A673 (cell line): ENCODE measurements at regions of chr11 and their contacts with region 1.

Region 1: GRCh38 chr11:120303004-120303637 is 22.0 kb upstream of the TLCD5 start:
- DNase-seq: peak; percentile 82
- H3K4me3 ChIP-seq: no peak overlapping the region
- H3K27ac ChIP-seq: no peak overlapping the region
- H3K4me1 ChIP-seq: no peaks in the 10 kb centered on the region
- H3K27me3 ChIP-seq: no peaks in the 10 kb centered on the region
- CTCF ChIP-seq: peak; percentile 96

Region 2: DNA sequence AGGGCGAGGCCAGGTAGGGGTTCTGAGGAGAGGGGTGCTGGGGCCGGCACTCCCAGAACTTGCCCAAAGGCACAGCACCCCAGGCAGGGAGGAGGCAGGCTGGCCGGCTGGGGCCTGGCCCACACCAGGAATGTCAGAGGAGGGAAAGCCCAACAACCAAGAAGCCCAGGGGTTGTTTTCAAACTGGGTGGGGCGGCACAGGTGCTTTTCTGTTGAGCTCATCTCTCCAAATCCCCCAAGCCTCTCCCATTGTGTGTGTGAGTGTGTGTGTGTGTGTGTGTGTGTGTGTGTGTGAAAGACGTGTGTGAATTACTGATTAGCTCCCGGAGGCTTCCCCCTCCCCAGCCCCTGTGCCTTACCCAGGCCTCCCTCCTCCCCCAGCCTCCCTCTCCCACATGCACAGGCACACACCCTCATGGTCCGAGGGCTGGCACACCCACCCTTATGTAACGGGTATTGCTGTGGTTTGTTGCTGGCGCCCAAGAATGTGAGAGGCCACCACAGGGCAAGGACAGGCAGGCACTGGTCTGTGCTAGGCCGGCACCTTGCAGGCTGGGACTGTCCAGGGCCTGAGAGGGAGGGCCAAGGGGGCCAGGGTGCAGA is 181.1 kb before region 1 on chr11:
- CTCF ChIA-PET with region 1: no interaction called
- POLR2A ChIA-PET with region 1: no interaction called
- intact Hi-C with region 1: no loop called
- DNase-seq: no peak
- H3K4me3 ChIP-seq: no peak overlapping the region
- H3K27ac ChIP-seq: no peak overlapping the region
- H3K4me1 ChIP-seq: no peaks in the 10 kb centered on the region
- H3K27me3 ChIP-seq: no peaks in the 10 kb centered on the region
- CTCF ChIP-seq: no peak

Region 3: DNA sequence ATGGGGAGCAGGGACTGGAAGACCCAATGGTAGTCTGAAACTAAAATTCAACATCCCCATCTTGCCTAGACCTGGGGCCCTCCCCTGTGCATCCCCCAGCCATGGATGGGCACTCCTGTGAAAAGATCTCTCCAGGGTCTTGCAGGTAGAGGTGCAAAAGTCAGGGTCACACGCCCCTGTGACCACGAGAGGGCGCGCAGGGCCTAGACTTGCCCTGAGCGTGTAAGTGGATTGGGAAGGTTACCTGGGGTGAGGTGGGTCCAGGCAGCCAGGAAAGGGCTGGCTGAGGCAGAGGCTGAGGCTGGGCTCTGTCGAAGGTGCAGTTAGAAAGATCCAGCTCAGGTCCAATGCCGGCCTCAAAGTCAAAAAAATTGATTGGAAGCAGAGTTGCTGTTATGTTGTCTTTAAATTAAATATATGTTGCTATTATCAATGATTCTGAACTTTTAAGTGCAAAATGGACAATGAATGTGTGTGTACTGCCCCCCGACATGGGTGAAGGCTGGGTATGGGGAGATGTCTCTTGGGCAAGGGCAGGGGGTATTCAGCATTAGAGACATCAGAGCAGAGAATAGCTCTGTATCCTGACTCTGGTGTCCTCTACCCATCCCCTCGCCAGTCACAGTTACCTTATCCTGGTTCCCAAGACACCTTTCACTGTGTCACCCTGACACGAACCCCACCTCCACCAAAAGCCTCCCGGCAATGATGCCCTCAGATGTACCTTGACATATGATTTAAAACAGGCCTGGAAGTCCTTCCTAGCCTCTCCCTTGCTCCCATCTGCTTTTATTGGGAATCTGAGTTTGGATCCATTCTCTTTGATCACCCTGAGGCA is 67.9 kb before region 1 on chr11:
- CTCF ChIA-PET with region 1: interaction called, 12 read pairs
- POLR2A ChIA-PET with region 1: no interaction called
- intact Hi-C with region 1: loop called (anchors 1 kb)
- DNase-seq: peak; percentile 53
- H3K4me3 ChIP-seq: no peak overlapping the region
- H3K27ac ChIP-seq: no peak overlapping the region
- H3K4me1 ChIP-seq: no peaks in the 10 kb centered on the region
- H3K27me3 ChIP-seq: peaks cover 20% of the 10 kb centered on the region
- CTCF ChIP-seq: peak; percentile 93

Region 4: GRCh38 chr11:120773501-120774031 is 470.4 kb after region 1 on chr11:
- CTCF ChIA-PET with region 1: no interaction called
- POLR2A ChIA-PET with region 1: no interaction called
- intact Hi-C with region 1: no loop called
- DNase-seq: no peak
- H3K4me3 ChIP-seq: no peak overlapping the region
- H3K27ac ChIP-seq: no peak overlapping the region
- H3K4me1 ChIP-seq: no peaks in the 10 kb centered on the region
- H3K27me3 ChIP-seq: peaks cover 9% of the 10 kb centered on the region
- CTCF ChIP-seq: no peak